AG04450 (cell line): ENCODE measurements at regions of chr6 and their contacts with region 1.

Region 1: GRCh38 chr6:119349323-119350042 is at the start of gene MAN1A1:
- DNase-seq: peak; percentile 15
- H3K4me3 ChIP-seq: peak within 1 kb of the TSS; percentile 86
- H3K27ac ChIP-seq: peak within 1 kb of the TSS; percentile 25
- H3K27me3 ChIP-seq: no peaks in the 10 kb centered on the region
- CTCF ChIP-seq: no peak
- polyA plus RNA-seq, gene MAN1A1: 18.7 and 27.5 TPM in 2 replicates

Region 2: GRCh38 chr6:119368951-119369350 is 19.5 kb after region 1 on chr6:
- CTCF ChIA-PET with region 1: no interaction called
- POLR2A ChIA-PET with region 1: no interaction called
- DNase-seq: no peak
- H3K4me3 ChIP-seq: no peak overlapping the region
- H3K27ac ChIP-seq: no peak overlapping the region
- H3K27me3 ChIP-seq: no peaks in the 10 kb centered on the region
- CTCF ChIP-seq: no peak

Region 3: GRCh38 chr6:119978274-119978889 is 628.9 kb after region 1 on chr6:
- CTCF ChIA-PET with region 1: interaction called, 30 read pairs
- POLR2A ChIA-PET with region 1: no interaction called
- DNase-seq: no peak
- H3K4me3 ChIP-seq: no peak overlapping the region
- H3K27ac ChIP-seq: no peak overlapping the region
- H3K27me3 ChIP-seq: no peaks in the 10 kb centered on the region
- CTCF ChIP-seq: peak; percentile 65